GM10248 (cell line): ENCODE measurements at regions of chr12 and their contacts with region 1.

Region 1: DNA sequence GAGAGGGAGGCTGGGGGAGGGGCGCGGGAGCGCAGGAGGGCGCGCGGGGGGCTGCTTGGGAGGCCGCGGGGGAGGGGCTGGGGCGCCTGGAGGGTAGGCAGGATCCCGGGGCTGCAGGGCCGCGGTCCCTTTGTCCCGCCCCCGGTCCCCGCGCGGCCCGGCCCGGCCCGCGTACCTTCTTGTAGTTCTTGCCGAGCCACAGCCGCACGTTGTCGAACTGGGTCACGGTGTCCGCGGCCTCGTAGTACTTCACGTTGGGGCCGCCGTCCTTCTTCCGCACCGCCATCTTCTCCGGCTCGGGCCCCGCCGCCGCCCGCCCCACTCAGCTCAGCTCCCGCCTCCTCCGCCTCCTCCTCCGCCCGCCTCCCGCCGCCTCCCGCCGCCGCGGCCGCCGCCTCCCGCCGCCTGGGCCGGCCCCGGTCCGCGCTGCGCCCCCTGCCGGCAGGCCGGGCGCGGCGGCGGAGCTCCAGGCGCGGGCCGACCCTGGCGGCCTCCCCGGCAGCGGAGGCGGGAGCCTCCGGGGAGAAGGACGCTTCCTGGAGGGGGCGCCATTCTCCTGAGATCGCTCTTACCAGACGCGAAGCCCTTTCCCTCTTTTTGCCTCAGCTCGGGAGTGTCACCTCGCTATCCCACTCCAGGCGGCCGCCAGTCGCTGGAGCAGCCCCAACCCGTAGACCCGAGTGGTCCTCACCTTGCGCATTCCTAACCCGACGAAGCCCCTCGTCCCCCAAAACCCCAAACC is at the start of gene SMARCC2:
- DNase-seq: peak; percentile 95
- CTCF ChIP-seq: peak; percentile 88

Region 2: DNA sequence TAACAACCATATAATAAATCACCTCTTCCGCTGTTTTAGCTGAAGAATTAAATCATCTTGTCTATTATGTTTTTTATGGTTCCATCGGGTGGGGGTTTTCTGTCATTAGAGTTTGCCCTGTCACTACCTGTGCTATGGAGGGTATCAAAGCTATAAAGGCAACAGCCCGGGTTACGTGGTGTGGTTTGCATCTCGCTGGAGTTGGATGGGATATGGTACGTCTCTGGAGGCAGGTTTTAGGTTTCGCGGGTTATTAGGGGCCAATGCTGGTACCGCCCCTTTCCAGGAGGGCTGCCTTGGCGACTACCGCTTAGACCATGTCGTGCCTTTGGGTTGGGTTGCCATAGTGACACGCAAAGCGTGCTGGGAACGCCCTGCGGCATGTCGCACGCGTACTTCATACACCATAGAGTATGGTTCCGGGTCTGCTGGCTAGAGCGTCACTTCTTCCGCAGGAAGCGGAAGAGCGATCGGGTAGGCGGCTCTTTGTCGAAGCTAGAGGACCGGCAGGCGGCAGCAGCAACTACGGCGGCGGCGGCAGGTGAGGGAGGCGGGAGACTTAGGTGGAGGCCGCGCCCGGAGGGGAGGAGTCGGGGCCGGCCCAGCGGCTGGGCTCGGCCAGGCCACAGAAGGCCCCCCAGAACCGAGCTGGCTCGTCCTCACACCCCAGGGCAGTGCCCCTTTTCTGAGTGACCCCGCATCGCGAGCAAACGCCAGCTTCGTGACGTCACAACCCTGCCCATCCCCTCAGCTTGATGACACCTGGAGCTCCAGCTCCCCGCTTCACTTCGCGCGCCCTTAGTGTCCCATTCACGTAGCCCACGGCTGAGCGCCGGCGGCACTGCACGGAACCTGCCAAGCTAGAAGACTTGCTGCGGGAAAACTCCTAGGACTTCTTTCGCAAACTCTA is 71.3 kb before region 1 on chr12 and contains the start of gene ZC3H10:
- CTCF ChIA-PET with region 1: interaction called, 243 read pairs
- POLR2A ChIA-PET with region 1: interaction called, 16 read pairs
- DNase-seq: peak; percentile 93
- CTCF ChIP-seq: peak; percentile 62

Region 3: GRCh38 chr12:56178347-56178746 is 11.0 kb before region 1 on chr12:
- CTCF ChIA-PET with region 1: interaction called, 96 read pairs
- POLR2A ChIA-PET with region 1: no interaction called
- DNase-seq: no peak
- CTCF ChIP-seq: no peak

Region 4: DNA sequence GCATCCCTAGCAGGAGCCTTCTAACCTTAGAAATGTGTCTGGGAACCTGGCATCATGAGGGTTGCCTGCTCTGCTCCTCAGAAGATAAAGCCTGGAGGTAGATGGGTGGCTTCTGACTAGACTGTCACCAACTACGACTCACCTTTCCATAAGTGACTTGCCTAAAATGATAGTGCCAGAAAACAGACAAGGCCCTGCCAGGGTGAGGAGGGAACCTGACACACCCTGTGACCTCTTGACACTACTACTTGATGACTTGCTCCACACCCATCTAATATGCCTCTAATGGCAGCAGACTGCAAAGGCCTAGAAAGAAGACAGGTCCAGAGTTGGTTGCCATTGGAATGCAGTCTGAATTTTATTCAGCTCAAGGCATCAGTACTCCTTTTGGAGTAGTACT is 23.0 kb after region 1 on chr12:
- CTCF ChIA-PET with region 1: interaction called, 70 read pairs
- POLR2A ChIA-PET with region 1: interaction called, 9 read pairs
- DNase-seq: no peak
- CTCF ChIP-seq: no peak

Region 5: DNA sequence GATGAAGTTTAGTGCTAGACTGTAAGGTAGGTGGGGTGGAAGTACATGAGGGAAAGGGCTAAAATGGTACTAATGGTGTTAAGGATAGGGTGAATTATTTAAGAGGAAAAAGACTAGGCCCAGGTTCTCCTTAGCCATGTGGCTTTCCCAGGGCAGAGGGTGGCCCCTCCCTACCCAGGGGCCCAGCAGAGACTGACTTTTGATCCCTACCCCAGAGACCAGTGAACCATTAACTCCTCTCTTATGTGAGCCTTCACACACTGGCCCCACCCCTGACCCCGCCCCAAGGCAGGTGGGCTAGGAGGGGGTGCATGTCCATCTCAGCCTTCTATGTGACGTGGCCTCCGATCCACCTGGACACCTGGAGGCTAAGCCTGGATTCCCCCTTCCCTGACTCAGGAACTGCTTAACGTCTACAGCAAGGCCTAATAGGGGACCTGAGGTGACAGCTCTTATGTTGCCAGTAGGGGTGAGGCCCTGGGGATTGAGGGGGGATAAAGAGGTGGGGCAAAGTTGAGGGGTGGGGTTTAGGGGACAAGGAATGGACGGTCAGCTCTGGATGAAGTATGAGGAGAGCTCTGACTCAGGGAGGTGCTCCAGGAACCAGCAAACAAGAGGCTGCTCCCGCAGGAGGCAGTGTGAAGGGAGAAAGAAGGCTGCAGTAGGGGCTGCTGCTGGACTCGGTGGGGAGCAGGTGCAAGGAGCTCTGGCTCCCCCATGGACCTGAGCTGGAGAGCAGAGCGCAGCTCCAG is 41.3 kb after region 1 on chr12:
- CTCF ChIA-PET with region 1: interaction called, 10 read pairs
- POLR2A ChIA-PET with region 1: interaction called, 4 read pairs
- DNase-seq: no peak
- CTCF ChIP-seq: no peak

Region 6: DNA sequence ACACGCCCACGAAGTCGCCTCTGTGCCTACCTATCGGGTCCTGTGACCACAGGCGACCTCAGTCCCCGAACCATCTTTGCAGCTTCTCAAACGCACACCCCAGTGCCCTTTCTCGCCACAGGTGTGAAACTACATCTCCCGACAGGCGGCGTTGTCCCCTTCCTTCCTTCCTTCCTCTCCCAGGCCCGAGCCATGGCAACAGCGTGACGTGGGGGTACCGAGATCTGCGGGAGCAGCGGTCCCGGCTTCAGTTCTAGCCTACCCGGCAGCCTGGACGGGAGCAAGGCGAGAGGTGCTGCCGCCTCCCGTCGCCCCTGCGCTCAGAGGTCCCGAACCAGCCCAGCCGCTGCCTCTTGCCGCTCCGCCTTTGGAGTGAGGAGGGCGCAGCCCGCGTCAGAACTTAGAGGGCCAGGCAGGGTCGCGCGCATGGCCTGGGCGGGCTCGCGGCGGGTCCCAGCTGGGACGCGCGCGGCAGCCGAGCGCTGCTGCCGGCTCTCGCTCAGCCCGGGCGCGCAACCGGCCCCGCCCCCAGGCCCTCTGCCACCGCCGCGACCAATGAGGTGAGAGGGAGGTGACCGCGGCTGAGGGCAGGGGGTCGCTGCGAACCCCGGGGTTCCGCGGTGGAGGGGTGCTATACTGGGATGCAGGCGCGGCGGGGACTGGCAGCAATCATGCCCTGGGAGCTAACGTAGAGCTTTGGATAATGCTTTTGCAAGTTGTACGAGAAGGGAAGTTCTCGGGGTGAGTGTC is 77.5 kb after region 1 on chr12 and contains the start of gene COQ10A:
- CTCF ChIA-PET with region 1: interaction called, 11 read pairs
- POLR2A ChIA-PET with region 1: no interaction called
- DNase-seq: peak; percentile 94
- CTCF ChIP-seq: peak; percentile 43